ENCODE measurements at regions of chr10 and their contacts with region 1.

Region 1: DNA sequence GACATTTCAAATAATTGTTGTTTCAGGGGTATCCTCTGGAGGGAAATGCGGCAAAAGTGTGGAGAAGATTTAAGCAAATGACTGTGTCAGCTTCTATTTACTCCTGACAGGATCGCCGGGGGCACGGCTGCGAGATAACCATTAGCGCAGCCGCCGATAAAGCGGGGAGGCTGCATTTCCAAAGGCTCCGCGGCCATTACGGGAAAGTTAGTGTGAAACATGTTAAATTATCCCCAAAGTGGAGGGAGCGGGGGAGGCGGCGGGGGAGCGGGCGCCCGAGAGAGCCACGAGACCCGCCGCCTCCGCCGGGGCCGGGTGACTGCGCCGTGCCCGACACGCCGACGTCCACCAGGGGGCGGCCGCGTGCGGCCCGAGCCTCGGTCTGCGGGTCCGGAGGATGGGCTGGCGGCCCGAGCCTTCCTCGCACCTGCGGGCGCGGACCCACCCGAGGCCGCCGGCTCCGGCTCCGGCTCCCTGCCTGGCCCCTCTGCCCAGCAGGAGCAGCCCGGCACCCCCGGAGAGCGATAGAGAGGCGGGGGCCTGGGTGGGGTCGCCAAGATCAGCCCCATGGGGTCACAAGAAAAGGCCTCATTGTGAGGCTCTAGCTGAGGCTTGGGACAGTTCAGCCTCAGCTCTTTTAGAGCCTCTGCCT is 74.4 kb upstream of the PAX2 start:
- DNase-seq: peak; percentile 65 to 72
- ATAC-seq: peak; percentile 76 to 96 (median 80)
- H3K4me3 ChIP-seq: no peak overlapping the region
- H3K4me3 Mint-ChIP-seq: no peak overlapping the region
- H3K27ac ChIP-seq: no peak overlapping the region
- H3K27ac Mint-ChIP-seq: no peak overlapping the region
- H3K4me1 ChIP-seq: peaks cover 3% of the 10 kb centered on the region
- H3K4me1 Mint-ChIP-seq: peaks cover 0 to 11% of the 10 kb centered on the region in 2 donors
- H3K27me3 ChIP-seq: peaks cover 21% of the 10 kb centered on the region
- H3K27me3 Mint-ChIP-seq: peaks cover 50 to 64% of the 10 kb centered on the region in 2 donors
- CTCF ChIP-seq: peak; percentile 88

Region 2: DNA sequence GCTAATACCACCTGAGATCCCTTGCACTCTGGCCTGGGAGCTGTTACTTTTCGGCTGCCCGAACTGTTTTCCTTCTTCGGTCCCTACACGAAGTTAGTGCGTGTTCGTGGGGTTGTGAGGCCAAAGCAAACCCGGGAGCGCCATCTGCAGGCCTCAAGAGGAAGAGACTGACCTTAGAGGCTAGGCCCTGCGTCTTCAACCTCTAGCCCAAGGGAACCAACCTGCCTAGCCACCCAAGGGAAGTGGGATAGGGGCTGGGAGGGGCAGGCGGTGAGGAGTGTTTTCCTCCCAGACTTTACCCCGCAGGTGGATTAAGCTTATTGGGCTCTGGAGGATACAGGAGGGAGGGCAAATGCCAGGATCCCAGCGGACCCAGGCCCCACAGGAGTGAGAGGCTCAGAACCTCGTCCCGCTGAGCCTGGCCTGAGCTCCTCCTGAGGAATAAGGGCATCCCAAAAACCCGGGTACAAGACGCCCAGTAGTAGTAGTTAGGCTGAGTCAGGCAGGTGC is 72.7 kb after region 1 on chr10:
- intact Hi-C with region 1: loop called (anchors 1 kb)
- DNase-seq: peak in 1 of 2 donors; percentile 83
- ATAC-seq: peak; percentile 46 to 78 (median 55)
- H3K4me3 ChIP-seq: no peak overlapping the region
- H3K4me3 Mint-ChIP-seq: no peak overlapping the region
- H3K27ac ChIP-seq: no peak overlapping the region
- H3K27ac Mint-ChIP-seq: no peak overlapping the region
- H3K4me1 ChIP-seq: peaks cover 10% of the 10 kb centered on the region
- H3K4me1 Mint-ChIP-seq: peaks cover 12 to 25% of the 10 kb centered on the region in 2 donors
- H3K27me3 ChIP-seq: peaks cover 64% of the 10 kb centered on the region
- H3K27me3 Mint-ChIP-seq: peaks cover 56 to 62% of the 10 kb centered on the region in 2 donors
- CTCF ChIP-seq: no peak

Region 3: GRCh38 chr10:100827819-100828737 is 157.1 kb after region 1 on chr10:
- intact Hi-C with region 1: loop called (anchors 5 kb)
- DNase-seq: peak; percentile 43 to 50
- ATAC-seq: peak; percentile 54 to 70 (median 68)
- H3K4me3 ChIP-seq: peak overlapping the region; percentile 26
- H3K4me3 Mint-ChIP-seq: peak overlapping the region; percentile 79
- H3K27ac ChIP-seq: no peak overlapping the region
- H3K27ac Mint-ChIP-seq: peak overlapping the region in 1 of 2 donors; percentile 79
- H3K4me1 ChIP-seq: peaks cover 40% of the 10 kb centered on the region
- H3K4me1 Mint-ChIP-seq: peaks cover 25 to 48% of the 10 kb centered on the region in 2 donors
- H3K27me3 ChIP-seq: peaks cover 53% of the 10 kb centered on the region
- H3K27me3 Mint-ChIP-seq: peaks cover 66 to 68% of the 10 kb centered on the region in 2 donors
- CTCF ChIP-seq: no peak

Region 4: GRCh38 chr10:100878291-100878910 is 207.4 kb after region 1 on chr10:
- intact Hi-C with region 1: loop called (anchors 2 kb)
- DNase-seq: peak in 1 of 2 donors; percentile 52
- ATAC-seq: peak in 1 of 3 donors; percentile 52
- H3K4me3 ChIP-seq: no peak overlapping the region
- H3K4me3 Mint-ChIP-seq: no peak overlapping the region
- H3K27ac ChIP-seq: no peak overlapping the region
- H3K27ac Mint-ChIP-seq: no peak overlapping the region
- H3K4me1 ChIP-seq: no peaks in the 10 kb centered on the region
- H3K4me1 Mint-ChIP-seq: no peaks in the 10 kb centered on the region
- H3K27me3 ChIP-seq: no peaks in the 10 kb centered on the region
- H3K27me3 Mint-ChIP-seq: peaks cover 10 to 11% of the 10 kb centered on the region in 2 donors
- CTCF ChIP-seq: no peak

Region 5: DNA sequence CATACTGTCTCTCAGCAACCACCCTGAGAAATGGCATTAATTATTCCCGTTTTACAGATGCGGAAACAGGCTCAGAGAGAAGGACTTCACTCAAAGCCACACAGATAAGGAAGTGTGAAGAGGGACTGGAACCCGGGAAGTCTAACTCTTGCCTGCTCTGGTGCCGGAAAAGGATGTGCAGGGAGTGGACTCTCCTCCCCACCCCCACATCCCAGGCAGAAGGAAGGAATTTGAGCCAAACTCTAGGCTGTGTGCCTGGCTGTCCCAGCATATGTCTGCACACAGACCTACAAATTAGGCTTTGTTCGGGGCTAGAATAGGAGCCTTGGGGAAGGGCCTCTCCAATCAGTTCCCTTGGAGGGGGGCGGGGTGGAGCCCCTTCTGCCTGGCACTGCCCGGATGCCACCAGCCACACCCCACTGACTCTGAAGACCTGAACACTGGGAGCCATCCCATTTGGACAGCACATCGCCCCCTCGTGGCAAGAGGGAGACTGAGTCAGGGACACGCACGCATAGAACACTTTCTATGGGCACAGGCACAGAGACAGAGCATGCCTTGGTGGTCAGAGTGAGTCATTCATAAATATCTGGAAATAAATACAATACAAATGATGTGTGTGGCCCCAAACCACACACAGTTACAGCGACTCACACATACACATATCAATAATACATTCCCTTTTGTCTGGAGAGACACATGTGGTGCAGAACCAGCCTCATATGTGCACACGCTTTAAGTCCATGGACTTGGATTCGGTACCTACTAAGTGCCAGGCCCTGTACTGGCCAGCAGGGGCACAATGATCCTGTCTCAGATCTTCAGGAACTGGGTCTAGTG is 341.8 kb after region 1 on chr10:
- intact Hi-C with region 1: loop called (anchors 5 kb)
- DNase-seq: peak; percentile 53 to 87
- ATAC-seq: peak; percentile 82 to 84 (median 83)
- H3K4me3 ChIP-seq: no peak overlapping the region
- H3K4me3 Mint-ChIP-seq: no peak overlapping the region
- H3K27ac ChIP-seq: no peak overlapping the region
- H3K27ac Mint-ChIP-seq: peak overlapping the region in 1 of 2 donors; percentile 9
- H3K4me1 ChIP-seq: peaks cover 8% of the 10 kb centered on the region
- H3K4me1 Mint-ChIP-seq: peaks cover 10 to 16% of the 10 kb centered on the region in 2 donors
- H3K27me3 ChIP-seq: peaks cover 8% of the 10 kb centered on the region
- H3K27me3 Mint-ChIP-seq: peaks cover 28 to 34% of the 10 kb centered on the region in 2 donors
- CTCF ChIP-seq: peak; percentile 67

Measured in natural killer cell (primary cell).